Adrenal gland (tissue), 19 donors: ENCODE measurements at regions of chr1 and their contacts with region 1.

Region 1: GRCh38 chr1:150813058-150813707 is 5.1 kb upstream of the CTSK start:
- DNase-seq: peak; percentile 55 to 81 (median 67)
- H3K4me3 ChIP-seq: no peak overlapping the region
- H3K27ac ChIP-seq: no peak overlapping the region
- H3K4me1 ChIP-seq: peaks cover 0 to 7% of the 10 kb centered on the region in 2 donors
- H3K27me3 ChIP-seq: no peaks in the 10 kb centered on the region
- CTCF ChIP-seq: peak; percentile 42 to 68 (median 63)
- POLR2A ChIP-seq: no peak

Region 2: DNA sequence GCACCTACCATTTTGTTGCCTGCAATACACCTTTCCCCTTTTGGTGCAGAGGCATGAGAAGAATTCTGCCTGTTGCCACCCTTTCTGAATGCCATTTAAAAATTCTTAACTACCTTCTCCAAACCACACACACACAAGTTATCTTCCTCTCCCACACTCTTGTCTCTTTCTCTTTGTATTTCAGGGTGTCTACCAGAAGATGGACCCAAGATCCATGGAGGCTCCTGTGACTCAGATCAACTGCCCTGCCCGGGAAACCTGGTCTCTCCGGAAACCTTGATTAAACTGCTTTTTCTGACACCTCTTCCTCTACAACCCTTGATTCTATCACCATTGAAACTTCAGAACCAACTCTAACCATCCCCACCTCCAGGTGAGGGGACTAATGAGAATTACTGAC is 328.3 kb before region 1 on chr1:
- intact Hi-C with region 1: no loop called
- DNase-seq: peak in 1 of 7 donors; percentile 27
- H3K4me3 ChIP-seq: no peak overlapping the region
- H3K27ac ChIP-seq: no peak overlapping the region
- H3K4me1 ChIP-seq: peaks cover 7 to 14% of the 10 kb centered on the region in 2 donors
- H3K27me3 ChIP-seq: no peaks in the 10 kb centered on the region
- CTCF ChIP-seq: no peak
- POLR2A ChIP-seq: no peak

Region 3: GRCh38 chr1:150552093-150552691 is 261.0 kb before region 1 on chr1:
- intact Hi-C with region 1: loop called in 1 of 2 experiments (anchors 10 kb)
- DNase-seq: peak; percentile 68 to 93 (median 91)
- H3K4me3 ChIP-seq: no peak overlapping the region
- H3K27ac ChIP-seq: peak overlapping the region in 4 of 5 donors; percentile 2 to 92 (median 64)
- H3K4me1 ChIP-seq: peaks cover 26 to 40% of the 10 kb centered on the region in 2 donors
- H3K27me3 ChIP-seq: no peaks in the 10 kb centered on the region
- CTCF ChIP-seq: no peak
- POLR2A ChIP-seq: peak in 1 of 2 donors; percentile 37

Region 4: GRCh38 chr1:150909585-150910180 is 96.5 kb after region 1 on chr1:
- intact Hi-C with region 1: loop called in 1 of 2 experiments (anchors 10 kb)
- DNase-seq: no peak
- H3K4me3 ChIP-seq: no peak overlapping the region
- H3K27ac ChIP-seq: no peak overlapping the region
- H3K4me1 ChIP-seq: no peaks in the 10 kb centered on the region
- H3K27me3 ChIP-seq: no peaks in the 10 kb centered on the region
- CTCF ChIP-seq: no peak
- POLR2A ChIP-seq: no peak

Region 5: DNA sequence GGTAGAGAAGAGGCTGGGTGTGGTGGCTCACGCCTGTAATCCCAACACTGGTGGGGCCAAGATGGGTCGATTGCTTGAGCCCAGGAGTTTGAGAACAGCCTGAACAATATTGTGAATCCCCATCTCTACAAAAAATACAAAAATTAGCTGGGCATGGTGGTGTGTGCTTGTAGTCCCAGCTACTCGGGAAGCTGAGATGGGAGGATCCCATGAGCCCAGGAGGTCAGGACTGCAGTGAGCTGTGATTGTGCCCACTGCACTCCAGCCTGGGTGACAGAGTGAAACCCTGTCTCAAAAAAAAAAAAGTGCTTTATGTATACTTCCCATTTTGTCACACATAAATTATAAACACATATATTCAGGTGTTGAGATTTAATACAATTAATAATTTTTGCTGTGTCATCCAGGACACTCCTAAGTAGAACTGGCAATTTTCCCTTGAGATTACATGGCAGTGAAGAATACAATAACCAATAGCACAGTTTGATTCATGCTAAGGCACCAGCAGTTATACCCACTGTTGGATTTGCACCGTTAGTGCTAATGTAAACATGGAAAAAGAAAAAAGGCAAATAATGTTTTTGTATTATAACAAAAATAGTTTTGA is 272.9 kb after region 1 on chr1:
- intact Hi-C with region 1: no loop called
- DNase-seq: peak in 1 of 7 donors; percentile 1
- H3K4me3 ChIP-seq: no peak overlapping the region
- H3K27ac ChIP-seq: no peak overlapping the region
- H3K4me1 ChIP-seq: no peaks in the 10 kb centered on the region
- H3K27me3 ChIP-seq: no peaks in the 10 kb centered on the region
- CTCF ChIP-seq: no peak
- POLR2A ChIP-seq: no peak